Natural killer cell (primary cell): ENCODE measurements at regions of chrX and their contacts with region 1.

Region 1: GRCh38 chrX:1657367-1658070 is 42.7 kb downstream of the ASMT start:
- DNase-seq: peak; percentile 73 to 90
- ATAC-seq: peak; percentile 67 to 97 (median 67)
- H3K4me3 ChIP-seq: peak overlapping the region; percentile 55
- H3K4me3 Mint-ChIP-seq: peak overlapping the region; percentile 82
- H3K27ac ChIP-seq: peak overlapping the region; percentile 94
- H3K27ac Mint-ChIP-seq: peak overlapping the region; percentile 97 to 98
- H3K4me1 ChIP-seq: peaks cover 52% of the 10 kb centered on the region
- H3K4me1 Mint-ChIP-seq: peaks cover 34 to 43% of the 10 kb centered on the region in 2 donors
- H3K27me3 ChIP-seq: no peaks in the 10 kb centered on the region
- H3K27me3 Mint-ChIP-seq: no peaks in the 10 kb centered on the region
- CTCF ChIP-seq: no peak

Region 2: DNA sequence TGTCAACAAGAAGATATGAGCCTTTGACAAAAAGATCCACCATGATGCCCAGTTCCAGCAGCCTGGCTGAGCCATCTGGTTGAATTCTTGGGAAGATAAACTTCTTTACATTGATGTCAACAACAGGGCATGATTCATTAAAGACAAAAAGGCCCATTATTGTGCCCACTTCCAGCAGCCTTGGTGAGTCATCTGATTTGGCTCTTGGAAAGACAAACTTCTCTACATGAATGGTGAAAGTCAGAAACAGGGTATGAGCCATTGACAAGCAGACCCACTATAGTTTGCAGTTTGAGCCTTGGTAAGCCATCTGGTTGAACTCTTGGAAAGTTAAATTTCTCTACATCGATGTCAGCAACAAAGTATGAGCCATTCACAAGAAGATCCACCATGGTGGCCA is 393.0 kb before region 1 on chrX:
- intact Hi-C with region 1: no loop called
- DNase-seq: no peak
- ATAC-seq: no peak
- H3K4me3 ChIP-seq: no peak overlapping the region
- H3K4me3 Mint-ChIP-seq: no peak overlapping the region
- H3K27ac ChIP-seq: no peak overlapping the region
- H3K27ac Mint-ChIP-seq: no peak overlapping the region
- H3K4me1 ChIP-seq: peaks cover 14% of the 10 kb centered on the region
- H3K4me1 Mint-ChIP-seq: peaks cover 17 to 27% of the 10 kb centered on the region in 2 donors
- H3K27me3 ChIP-seq: no peaks in the 10 kb centered on the region
- H3K27me3 Mint-ChIP-seq: no peaks in the 10 kb centered on the region
- CTCF ChIP-seq: no peak

Region 3: GRCh38 chrX:1462596-1463251 is 194.8 kb before region 1 on chrX:
- intact Hi-C with region 1: loop called (anchors 5 kb)
- DNase-seq: peak; percentile 58 to 95
- ATAC-seq: peak; percentile 69 to 86 (median 82)
- H3K4me3 ChIP-seq: no peak overlapping the region
- H3K4me3 Mint-ChIP-seq: peak overlapping the region; percentile 92
- H3K27ac ChIP-seq: peak overlapping the region; percentile 83
- H3K27ac Mint-ChIP-seq: peak overlapping the region; percentile 90 to 91
- H3K4me1 ChIP-seq: peaks cover 65% of the 10 kb centered on the region
- H3K4me1 Mint-ChIP-seq: peaks cover 54 to 56% of the 10 kb centered on the region in 2 donors
- H3K27me3 ChIP-seq: no peaks in the 10 kb centered on the region
- H3K27me3 Mint-ChIP-seq: no peaks in the 10 kb centered on the region
- CTCF ChIP-seq: no peak

Region 4: GRCh38 chrX:1681439-1681838 is 23.9 kb after region 1 on chrX:
- intact Hi-C with region 1: loop called (anchors 2 kb)
- DNase-seq: no peak
- ATAC-seq: no peak
- H3K4me3 ChIP-seq: no peak overlapping the region
- H3K4me3 Mint-ChIP-seq: peak overlapping the region; percentile 59
- H3K27ac ChIP-seq: no peak overlapping the region
- H3K27ac Mint-ChIP-seq: peak overlapping the region; percentile 85 to 88
- H3K4me1 ChIP-seq: no peaks in the 10 kb centered on the region
- H3K4me1 Mint-ChIP-seq: peaks cover 19 to 36% of the 10 kb centered on the region in 2 donors
- H3K27me3 ChIP-seq: no peaks in the 10 kb centered on the region
- H3K27me3 Mint-ChIP-seq: no peaks in the 10 kb centered on the region
- CTCF ChIP-seq: no peak

Region 5: GRCh38 chrX:2283111-2284067 is 625.9 kb after region 1 on chrX:
- intact Hi-C with region 1: no loop called
- DNase-seq: no peak
- ATAC-seq: no peak
- H3K4me3 ChIP-seq: no peak overlapping the region
- H3K4me3 Mint-ChIP-seq: no peak overlapping the region
- H3K27ac ChIP-seq: no peak overlapping the region
- H3K27ac Mint-ChIP-seq: no peak overlapping the region
- H3K4me1 ChIP-seq: no peaks in the 10 kb centered on the region
- H3K4me1 Mint-ChIP-seq: peaks cover 8 to 13% of the 10 kb centered on the region in 2 donors
- H3K27me3 ChIP-seq: no peaks in the 10 kb centered on the region
- H3K27me3 Mint-ChIP-seq: no peaks in the 10 kb centered on the region
- CTCF ChIP-seq: no peak

Region 6: GRCh38 chrX:2595258-2595657 is 937.7 kb after region 1 on chrX:
- intact Hi-C with region 1: loop called (anchors 2 kb)
- DNase-seq: no peak
- ATAC-seq: no peak
- H3K4me3 ChIP-seq: no peak overlapping the region
- H3K4me3 Mint-ChIP-seq: no peak overlapping the region
- H3K27ac ChIP-seq: no peak overlapping the region
- H3K27ac Mint-ChIP-seq: peak overlapping the region in 1 of 2 donors; percentile 31
- H3K4me1 ChIP-seq: peaks cover 4% of the 10 kb centered on the region
- H3K4me1 Mint-ChIP-seq: peaks cover 11 to 13% of the 10 kb centered on the region in 2 donors
- H3K27me3 ChIP-seq: no peaks in the 10 kb centered on the region
- H3K27me3 Mint-ChIP-seq: no peaks in the 10 kb centered on the region
- CTCF ChIP-seq: no peak

Region 7: GRCh38 chrX:2690856-2691542 is 1033.5 kb after region 1 on chrX and contains the start of gene CD99:
- intact Hi-C with region 1: loop called (anchors 2 kb)
- DNase-seq: peak; percentile 77 to 94
- ATAC-seq: peak; percentile 87 to 96 (median 93)
- H3K4me3 ChIP-seq: peak within 1 kb of the TSS; percentile 82
- H3K4me3 Mint-ChIP-seq: peak within 1 kb of the TSS; percentile 99
- H3K27ac ChIP-seq: peak within 1 kb of the TSS; percentile 60
- H3K27ac Mint-ChIP-seq: peak within 1 kb of the TSS; percentile 86 to 88
- H3K4me1 ChIP-seq: peaks cover 45% of the 10 kb centered on the region
- H3K4me1 Mint-ChIP-seq: peaks cover 37 to 39% of the 10 kb centered on the region in 2 donors
- H3K27me3 ChIP-seq: no peaks in the 10 kb centered on the region
- H3K27me3 Mint-ChIP-seq: no peaks in the 10 kb centered on the region
- CTCF ChIP-seq: no peak
- total RNA-seq, gene CD99: 312 to 340 (median 333) TPM